ENCODE measurements at regions of chr4 and their contacts with region 1.

Region 1: GRCh38 chr4:173990126-173990868 is 293.2 kb downstream of the FBXO8 start:
- DNase-seq: no peak
- H3K4me3 ChIP-seq: no peak overlapping the region
- H3K27ac ChIP-seq: peak overlapping the region; percentile 43 to 73 (median 63)
- H3K4me1 ChIP-seq: peaks cover 0 to 42% (median 28%) of the 10 kb centered on the region in 4 donors
- H3K27me3 ChIP-seq: no peaks in the 10 kb centered on the region
- CTCF ChIP-seq: peak; percentile 48 to 67 (median 56)
- EP300 ChIP-seq: no peak
- POLR2A ChIP-seq: no peak

Region 2: GRCh38 chr4:173735049-173735448 is 255.2 kb before region 1 on chr4:
- intact Hi-C with region 1: loop called (anchors 10 kb)
- DNase-seq: no peak
- H3K4me3 ChIP-seq: no peak overlapping the region
- H3K27ac ChIP-seq: no peak overlapping the region
- H3K4me1 ChIP-seq: peaks cover 0 to 17% (median 12%) of the 10 kb centered on the region in 4 donors
- H3K27me3 ChIP-seq: no peaks in the 10 kb centered on the region
- CTCF ChIP-seq: no peak
- EP300 ChIP-seq: no peak
- POLR2A ChIP-seq: no peak

Region 3: GRCh38 chr4:173935622-173936405 is 54.5 kb before region 1 on chr4:
- intact Hi-C with region 1: loop called (anchors 5 kb)
- DNase-seq: no peak
- H3K4me3 ChIP-seq: no peak overlapping the region
- H3K27ac ChIP-seq: peak overlapping the region; percentile 70 to 81 (median 73)
- H3K4me1 ChIP-seq: peaks cover 0 to 50% (median 43%) of the 10 kb centered on the region in 4 donors
- H3K27me3 ChIP-seq: no peaks in the 10 kb centered on the region
- CTCF ChIP-seq: no peak
- EP300 ChIP-seq: peak in 3 of 4 donors; percentile 4 to 58 (median 32)
- POLR2A ChIP-seq: no peak